ENCODE measurements at regions of chr6 and their contacts with region 1.

Region 1: GRCh38 chr6:73985891-73986290 is 289.9 kb downstream of the CD109 start:
- DNase-seq: peak; percentile 89
- H3K4me3 ChIP-seq: no peak overlapping the region
- H3K27me3 ChIP-seq: no peaks in the 10 kb centered on the region
- CTCF ChIP-seq: peak; percentile 45

Region 2: GRCh38 chr6:73969971-73970970 is 15.6 kb before region 1 on chr6:
- CTCF ChIA-PET with region 1: interaction called, 24 read pairs
- POLR2A ChIA-PET with region 1: no interaction called
- DNase-seq: peak; percentile 30
- H3K4me3 ChIP-seq: no peak overlapping the region
- H3K27me3 ChIP-seq: no peaks in the 10 kb centered on the region
- CTCF ChIP-seq: peak; percentile 75